ENCODE measurements at regions of chr1 and their contacts with region 1.

Region 1: GRCh38 chr1:159891275-159892157 is 8.4 kb downstream of the CFAP45 start:
- DNase-seq: peak; percentile 81
- ATAC-seq: peak; percentile 86
- H3K4me3 ChIP-seq: no peak overlapping the region
- H3K4me3 Mint-ChIP-seq: no peak overlapping the region
- H3K27ac ChIP-seq: no peak overlapping the region
- H3K27ac Mint-ChIP-seq: peak overlapping the region; percentile 70
- H3K4me1 ChIP-seq: peaks cover 18 to 19% of the 10 kb centered on the region in 2 donors
- H3K4me1 Mint-ChIP-seq: peaks cover 26% of the 10 kb centered on the region
- H3K27me3 ChIP-seq: peaks cover 0 to 6% (median 0%) of the 10 kb centered on the region in 4 experiments
- H3K27me3 Mint-ChIP-seq: peaks cover 6% of the 10 kb centered on the region
- CTCF ChIP-seq: peak; percentile 78

Region 2: DNA sequence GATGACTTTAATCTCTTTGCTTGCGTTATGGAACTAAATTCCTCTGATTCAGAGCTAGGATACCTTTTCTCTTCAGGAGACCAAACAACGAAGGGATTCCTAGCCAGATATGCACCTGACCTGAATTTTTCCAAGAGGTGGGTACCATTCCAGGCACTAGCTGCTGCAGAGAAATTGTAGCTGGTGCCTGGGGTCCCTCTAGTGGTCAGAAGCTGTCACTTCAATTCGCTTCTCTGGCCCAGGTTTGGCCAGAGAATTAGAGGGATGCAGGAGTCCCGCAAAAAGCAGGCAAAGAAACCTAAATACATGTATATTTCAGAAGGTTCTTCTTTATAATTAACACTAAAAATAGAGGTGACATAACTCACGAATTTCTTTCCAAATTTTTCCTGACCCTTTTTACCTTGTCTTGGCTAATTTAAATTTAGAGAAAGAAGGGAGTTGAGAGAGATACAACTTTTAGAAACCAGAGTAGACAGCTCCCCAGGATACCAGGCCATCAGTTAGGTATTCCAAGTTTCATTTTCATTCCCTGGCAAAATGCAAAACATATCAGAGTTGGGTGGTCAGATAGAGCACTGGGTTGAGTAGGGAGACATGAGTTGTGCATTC is 677.3 kb before region 1 on chr1:
- CTCF ChIA-PET with region 1: interaction called, 37 read pairs
- POLR2A ChIA-PET with region 1: no interaction called
- intact Hi-C with region 1: loop called (anchors 5 kb)
- DNase-seq: peak; percentile 64
- ATAC-seq: peak; percentile 73
- H3K4me3 ChIP-seq: no peak overlapping the region
- H3K4me3 Mint-ChIP-seq: no peak overlapping the region
- H3K27ac ChIP-seq: no peak overlapping the region
- H3K27ac Mint-ChIP-seq: no peak overlapping the region
- H3K4me1 ChIP-seq: peaks cover 0 to 3% of the 10 kb centered on the region in 2 donors
- H3K4me1 Mint-ChIP-seq: peaks cover 2% of the 10 kb centered on the region
- H3K27me3 ChIP-seq: peaks cover 0 to 25% (median 7%) of the 10 kb centered on the region in 4 experiments
- H3K27me3 Mint-ChIP-seq: peaks cover 54% of the 10 kb centered on the region
- CTCF ChIP-seq: peak; percentile 98

Region 3: DNA sequence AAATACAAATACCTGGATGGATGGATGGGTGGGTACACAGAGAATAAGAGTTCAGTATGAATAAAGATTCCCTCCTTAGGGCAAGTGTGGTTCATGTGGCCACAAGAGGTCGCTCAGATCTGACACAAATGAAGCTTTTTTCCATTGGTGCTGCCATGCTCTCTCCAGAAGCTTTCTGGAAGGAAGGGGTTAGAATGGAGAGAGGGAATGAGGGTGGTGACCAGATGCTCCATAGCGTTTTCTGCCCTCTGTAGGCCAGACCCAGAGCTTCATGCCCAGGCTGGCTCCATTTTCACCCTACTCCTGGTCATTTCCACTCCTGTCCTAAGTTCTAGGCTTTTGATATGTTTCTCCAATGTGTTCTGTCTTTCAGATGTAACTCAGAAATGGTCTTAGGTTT is 92.6 kb before region 1 on chr1:
- CTCF ChIA-PET with region 1: interaction called, 211 read pairs
- POLR2A ChIA-PET with region 1: no interaction called
- intact Hi-C with region 1: loop called (anchors 1 kb)
- DNase-seq: peak; percentile 65
- ATAC-seq: peak; percentile 56
- H3K4me3 ChIP-seq: no peak overlapping the region
- H3K4me3 Mint-ChIP-seq: no peak overlapping the region
- H3K27ac ChIP-seq: no peak overlapping the region
- H3K27ac Mint-ChIP-seq: no peak overlapping the region
- H3K4me1 ChIP-seq: peaks cover 0 to 7% of the 10 kb centered on the region in 2 donors
- H3K4me1 Mint-ChIP-seq: peaks cover 9% of the 10 kb centered on the region
- H3K27me3 ChIP-seq: peaks cover 0 to 30% (median 15%) of the 10 kb centered on the region in 4 experiments
- H3K27me3 Mint-ChIP-seq: peaks cover 54% of the 10 kb centered on the region
- CTCF ChIP-seq: peak; percentile 75

Region 4: DNA sequence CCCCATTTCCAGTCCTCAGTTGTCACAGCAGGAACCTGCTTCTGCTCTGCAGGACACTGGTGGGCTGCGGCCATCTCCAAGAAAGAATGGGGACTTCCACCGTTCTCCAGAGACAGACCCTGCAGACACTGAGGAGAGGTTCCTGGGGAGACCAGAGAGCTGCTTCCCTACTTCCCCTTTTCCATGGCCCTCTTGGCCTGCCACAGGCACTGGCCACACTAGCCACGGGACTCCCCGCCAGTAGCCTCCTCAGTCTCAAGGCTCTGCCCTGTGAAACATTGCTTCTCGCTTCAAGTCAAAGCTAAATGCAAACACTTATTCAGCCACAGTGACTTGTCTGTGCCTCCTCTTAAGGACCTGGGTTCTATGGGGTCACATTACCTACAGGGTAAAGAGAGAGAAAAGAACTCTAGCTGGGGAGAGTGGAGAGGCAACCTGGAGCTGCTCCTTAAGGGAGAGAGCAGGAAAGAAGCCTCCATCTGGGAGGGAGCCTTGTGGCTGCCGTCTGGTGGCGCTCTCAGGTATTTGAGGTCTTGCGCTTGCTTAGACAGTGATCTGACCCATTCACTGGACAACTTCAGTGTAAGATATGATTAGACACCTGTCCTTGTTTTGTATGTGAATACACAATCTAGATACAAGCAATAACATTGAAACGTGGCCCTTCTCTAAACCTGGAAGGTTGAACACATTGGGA is 70.2 kb before region 1 on chr1:
- CTCF ChIA-PET with region 1: interaction called, 16 read pairs
- POLR2A ChIA-PET with region 1: no interaction called
- intact Hi-C with region 1: no loop called
- DNase-seq: peak; percentile 52
- ATAC-seq: no peak
- H3K4me3 ChIP-seq: no peak overlapping the region
- H3K4me3 Mint-ChIP-seq: no peak overlapping the region
- H3K27ac ChIP-seq: no peak overlapping the region
- H3K27ac Mint-ChIP-seq: no peak overlapping the region
- H3K4me1 ChIP-seq: peaks cover under 1 to 3% of the 10 kb centered on the region in 2 donors
- H3K4me1 Mint-ChIP-seq: peaks cover 4% of the 10 kb centered on the region
- H3K27me3 ChIP-seq: peaks cover 0 to 6% (median 0%) of the 10 kb centered on the region in 4 experiments
- H3K27me3 Mint-ChIP-seq: peaks cover 52% of the 10 kb centered on the region
- CTCF ChIP-seq: peak; percentile 69

Region 5: GRCh38 chr1:159902551-159902950 is 11.0 kb after region 1 on chr1:
- CTCF ChIA-PET with region 1: interaction called, 19 read pairs
- POLR2A ChIA-PET with region 1: no interaction called
- intact Hi-C with region 1: no loop called
- DNase-seq: no peak
- ATAC-seq: no peak
- H3K4me3 ChIP-seq: no peak overlapping the region
- H3K4me3 Mint-ChIP-seq: no peak overlapping the region
- H3K27ac ChIP-seq: no peak overlapping the region
- H3K27ac Mint-ChIP-seq: no peak overlapping the region
- H3K4me1 ChIP-seq: peaks cover 9 to 11% of the 10 kb centered on the region in 2 donors
- H3K4me1 Mint-ChIP-seq: peaks cover 15% of the 10 kb centered on the region
- H3K27me3 ChIP-seq: peaks cover 0 to 4% (median 0%) of the 10 kb centered on the region in 4 experiments
- H3K27me3 Mint-ChIP-seq: no peaks in the 10 kb centered on the region
- CTCF ChIP-seq: no peak

Region 6: GRCh38 chr1:159936273-159936904 is 44.9 kb after region 1 on chr1:
- CTCF ChIA-PET with region 1: interaction called, 29 read pairs
- POLR2A ChIA-PET with region 1: interaction called, 4 read pairs
- intact Hi-C with region 1: loop called (anchors 2 kb)
- DNase-seq: peak; percentile 85
- ATAC-seq: peak; percentile 89
- H3K4me3 ChIP-seq: peak overlapping the region in 1 of 5 experiments; percentile 17
- H3K4me3 Mint-ChIP-seq: peak overlapping the region; percentile 49
- H3K27ac ChIP-seq: no peak overlapping the region
- H3K27ac Mint-ChIP-seq: peak overlapping the region; percentile 61
- H3K4me1 ChIP-seq: peaks cover 37 to 43% of the 10 kb centered on the region in 2 donors
- H3K4me1 Mint-ChIP-seq: peaks cover 47% of the 10 kb centered on the region
- H3K27me3 ChIP-seq: no peaks in the 10 kb centered on the region
- H3K27me3 Mint-ChIP-seq: peaks cover 4% of the 10 kb centered on the region
- CTCF ChIP-seq: peak; percentile 96